ENCODE measurements at regions of chr6 and their contacts with region 1.

Region 1: GRCh38 chr6:112372226-112372806 is 25.2 kb downstream of the RFPL4B start:
- DNase-seq: no peak
- ATAC-seq: peak in 4 of 8 donors; percentile 42 to 46 (median 44)
- H3K4me3 ChIP-seq: no peak overlapping the region
- H3K27ac ChIP-seq: no peak overlapping the region
- H3K4me1 ChIP-seq: peaks cover 0 to 1% (median 0%) of the 10 kb centered on the region in 9 donors
- H3K27me3 ChIP-seq: peaks cover 0 to 13% (median 6%) of the 10 kb centered on the region in 7 donors
- CTCF ChIP-seq: peak; percentile 14 to 60 (median 46)

Region 2: DNA sequence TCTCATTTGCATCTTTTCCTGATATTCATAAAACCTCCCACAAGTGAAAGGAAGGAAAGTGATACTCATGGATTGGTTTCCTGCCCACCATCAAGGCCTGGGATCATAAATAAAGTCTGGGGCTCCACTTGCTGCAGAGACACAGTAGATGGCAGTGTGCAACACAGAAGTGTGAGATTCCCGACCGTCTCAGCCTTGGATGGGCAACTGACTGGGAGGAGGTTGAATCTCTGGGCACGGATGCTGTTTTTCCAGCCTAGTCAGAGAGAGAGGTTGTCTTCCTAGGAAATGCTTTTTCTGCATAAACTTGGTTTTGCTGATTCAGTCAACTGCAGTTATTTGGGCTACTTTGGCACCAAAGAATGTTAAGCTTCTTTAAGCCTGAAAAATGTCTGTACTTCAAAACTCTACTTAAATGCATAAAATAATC is 35.1 kb before region 1 on chr6:
- intact Hi-C with region 1: loop called in 1 of 10 experiments (anchors 5 kb)
- DNase-seq: peak; percentile 19 to 51
- ATAC-seq: peak; percentile 69 to 93 (median 87)
- H3K4me3 ChIP-seq: no peak overlapping the region
- H3K27ac ChIP-seq: no peak overlapping the region
- H3K4me1 ChIP-seq: no peaks in the 10 kb centered on the region
- H3K27me3 ChIP-seq: no peaks in the 10 kb centered on the region
- CTCF ChIP-seq: peak; percentile 34 to 74 (median 64)

Region 3: DNA sequence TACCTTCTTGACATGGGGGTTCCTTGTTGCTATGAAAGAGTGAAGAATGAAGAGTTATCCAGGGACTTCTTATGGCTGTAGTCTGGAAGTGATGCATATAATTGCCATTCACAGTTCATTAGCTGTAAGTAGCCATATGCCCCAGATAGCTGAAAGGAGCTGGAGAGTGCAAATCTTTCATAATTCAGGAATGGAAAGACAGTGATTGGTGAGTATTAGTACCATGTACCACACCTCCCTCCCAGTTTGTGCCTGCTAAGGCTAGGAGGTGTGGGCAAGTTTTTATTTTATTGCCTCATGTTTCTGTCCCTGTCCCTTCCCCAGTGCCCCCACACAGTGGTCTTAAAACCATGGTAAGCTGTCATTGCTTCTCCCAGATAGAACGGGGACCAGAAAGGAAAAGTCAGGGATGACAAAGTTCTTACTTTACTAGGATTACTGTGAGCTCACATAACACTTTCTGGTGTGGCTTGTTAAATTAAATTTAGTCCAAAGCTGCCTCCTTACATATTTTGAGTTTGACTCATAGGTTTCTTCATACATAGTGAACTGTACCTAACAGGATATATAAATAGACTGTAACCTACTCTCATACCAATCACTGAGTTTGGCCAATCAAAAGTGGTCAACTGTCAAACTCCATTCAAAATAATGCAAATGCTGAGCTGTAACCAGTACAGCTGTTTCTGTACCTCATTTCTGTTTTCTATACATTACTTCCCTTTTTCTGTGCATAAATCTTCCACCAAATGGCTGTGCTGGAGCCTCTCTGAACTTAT is 94.2 kb after region 1 on chr6:
- intact Hi-C with region 1: no loop called
- DNase-seq: no peak
- ATAC-seq: no peak
- H3K4me3 ChIP-seq: no peak overlapping the region
- H3K27ac ChIP-seq: no peak overlapping the region
- H3K4me1 ChIP-seq: no peaks in the 10 kb centered on the region
- H3K27me3 ChIP-seq: no peaks in the 10 kb centered on the region
- CTCF ChIP-seq: no peak